ENCODE measurements at regions of chr11 and their contacts with region 1.

Region 1: GRCh38 chr11:102287964-102288724 is 29.1 kb upstream of the BIRC3 start:
- DNase-seq: peak; percentile 66 to 78
- H3K4me3 ChIP-seq: no peak overlapping the region
- H3K4me3 Mint-ChIP-seq: peak overlapping the region; percentile 1
- H3K27ac Mint-ChIP-seq: no peak overlapping the region
- H3K4me1 ChIP-seq: peaks cover 12% of the 10 kb centered on the region
- H3K4me1 Mint-ChIP-seq: peaks cover 7% of the 10 kb centered on the region
- H3K27me3 ChIP-seq: no peaks in the 10 kb centered on the region
- H3K27me3 Mint-ChIP-seq: no peaks in the 10 kb centered on the region
- CTCF ChIP-seq: peak; percentile 84

Region 2: GRCh38 chr11:102317099-102317767 is 29.1 kb after region 1 on chr11 and contains the start of gene BIRC3:
- CTCF ChIA-PET with region 1: interaction called, 4 read pairs
- POLR2A ChIA-PET with region 1: no interaction called
- intact Hi-C with region 1: loop called (anchors 2 kb)
- DNase-seq: peak; percentile 92 to 94
- H3K4me3 ChIP-seq: peak within 1 kb of the TSS; percentile 58
- H3K4me3 Mint-ChIP-seq: peak within 1 kb of the TSS; percentile 89
- H3K27ac Mint-ChIP-seq: peak within 1 kb of the TSS; percentile 80
- H3K4me1 ChIP-seq: peaks cover 12% of the 10 kb centered on the region
- H3K4me1 Mint-ChIP-seq: peaks cover 19% of the 10 kb centered on the region
- H3K27me3 ChIP-seq: no peaks in the 10 kb centered on the region
- H3K27me3 Mint-ChIP-seq: no peaks in the 10 kb centered on the region
- CTCF ChIP-seq: peak; percentile 55 to 59
- total RNA-seq, gene BIRC3: 1.4 and 2.2 TPM in 2 replicates

Region 3: GRCh38 chr11:102323542-102324251 is 35.6 kb after region 1 on chr11:
- CTCF ChIA-PET with region 1: no interaction called
- POLR2A ChIA-PET with region 1: no interaction called
- intact Hi-C with region 1: loop called (anchors 2 kb)
- DNase-seq: no peak
- H3K4me3 ChIP-seq: no peak overlapping the region
- H3K4me3 Mint-ChIP-seq: no peak overlapping the region
- H3K27ac Mint-ChIP-seq: no peak overlapping the region
- H3K4me1 ChIP-seq: no peaks in the 10 kb centered on the region
- H3K4me1 Mint-ChIP-seq: peaks cover 1% of the 10 kb centered on the region
- H3K27me3 ChIP-seq: no peaks in the 10 kb centered on the region
- H3K27me3 Mint-ChIP-seq: no peaks in the 10 kb centered on the region
- CTCF ChIP-seq: no peak

Region 4: DNA sequence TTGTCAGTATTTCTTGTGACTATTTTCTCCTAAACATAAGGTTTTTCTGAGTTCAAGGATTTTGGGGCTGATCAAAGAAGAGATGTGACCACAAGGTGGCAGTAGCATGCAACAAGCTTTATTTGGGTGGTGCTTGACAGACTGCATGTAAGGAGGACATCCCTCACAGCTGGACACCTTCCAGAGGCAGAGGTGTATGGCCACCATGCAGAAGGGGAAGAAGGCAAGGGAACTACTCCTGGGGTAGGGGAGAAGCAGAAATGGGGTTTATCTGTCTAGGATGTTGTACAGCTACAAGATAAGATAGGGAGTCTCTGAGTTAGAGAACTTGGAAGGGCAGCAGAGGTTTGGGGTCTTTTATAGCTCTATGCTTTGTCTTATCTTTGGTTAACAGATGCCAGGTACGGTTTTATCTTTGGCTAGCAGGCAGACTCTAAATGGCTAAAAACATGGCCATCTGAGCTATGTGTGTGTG is 53.7 kb after region 1 on chr11:
- CTCF ChIA-PET with region 1: interaction called, 3 read pairs
- POLR2A ChIA-PET with region 1: no interaction called
- intact Hi-C with region 1: loop called (anchors 1 kb)
- DNase-seq: peak; percentile 86 to 87
- H3K4me3 ChIP-seq: no peak overlapping the region
- H3K4me3 Mint-ChIP-seq: no peak overlapping the region
- H3K27ac Mint-ChIP-seq: no peak overlapping the region
- H3K4me1 ChIP-seq: peaks cover 4% of the 10 kb centered on the region; the same call in 1 of the 2 replicates
- H3K4me1 Mint-ChIP-seq: peaks cover 16% of the 10 kb centered on the region
- H3K27me3 ChIP-seq: no peaks in the 10 kb centered on the region
- H3K27me3 Mint-ChIP-seq: no peaks in the 10 kb centered on the region
- CTCF ChIP-seq: peak; percentile 92 to 95